Activated CD8-positive, alpha-beta T cell treated with anti-CD3 and anti-CD28 coated beads for 36 hours (primary cell): ENCODE measurements at regions of chr11 and their contacts with region 1.

Region 1: GRCh38 chr11:64787526-64788320 is 9.4 kb upstream of the SF1 start:
- DNase-seq: peak; percentile 78
- ATAC-seq: peak; percentile 78
- H3K4me3 Mint-ChIP-seq: no peak overlapping the region
- H3K27ac Mint-ChIP-seq: peak overlapping the region; percentile 49
- H3K4me1 Mint-ChIP-seq: peaks cover 4% of the 10 kb centered on the region
- H3K27me3 Mint-ChIP-seq: no peaks in the 10 kb centered on the region
- CTCF ChIP-seq: peak; percentile 66

Region 2: DNA sequence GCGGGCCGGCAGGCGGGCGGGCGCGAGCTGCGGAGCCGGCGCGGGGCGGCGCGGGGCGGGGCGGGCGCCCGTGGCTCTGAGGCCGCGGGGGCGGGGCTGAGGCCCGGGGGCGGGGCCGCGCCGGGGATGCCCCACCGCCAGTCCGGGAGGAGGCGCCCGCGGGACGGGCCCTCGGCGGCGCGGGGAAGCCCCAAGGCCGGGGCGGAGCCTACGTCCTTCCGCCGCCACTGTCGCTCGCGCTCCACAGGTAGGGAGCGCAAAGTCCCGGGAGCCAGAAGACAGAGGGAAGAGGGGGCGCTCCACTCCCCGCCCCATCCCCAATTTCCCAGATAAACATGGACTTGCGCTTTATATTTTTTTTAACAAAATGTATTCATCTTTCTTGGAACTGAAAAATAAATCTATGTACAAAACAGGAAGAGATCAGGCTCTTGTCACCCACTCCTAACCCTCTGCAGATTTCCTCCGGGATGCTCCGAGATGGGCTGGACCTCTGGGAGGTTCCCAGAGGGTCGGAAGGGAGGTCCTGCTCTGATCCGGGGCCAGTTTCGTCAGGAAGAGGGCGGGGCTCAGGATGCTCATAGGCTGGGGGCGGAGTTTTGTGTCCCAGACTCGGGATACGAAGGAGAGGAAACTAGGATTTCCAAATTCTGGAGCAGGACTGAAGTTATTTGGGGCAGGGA is 15.6 kb after region 1 on chr11 and contains the start of gene MAP4K2:
- CTCF ChIA-PET with region 1: interaction called, 17 read pairs
- POLR2A ChIA-PET with region 1: interaction called, 7 read pairs
- intact Hi-C with region 1: no loop called
- DNase-seq: peak; percentile 88
- ATAC-seq: peak; percentile 96
- H3K4me3 Mint-ChIP-seq: peak within 1 kb of the TSS; percentile 80
- H3K27ac Mint-ChIP-seq: peak within 1 kb of the TSS; percentile 89
- H3K4me1 Mint-ChIP-seq: peaks cover 37% of the 10 kb centered on the region
- H3K27me3 Mint-ChIP-seq: no peaks in the 10 kb centered on the region
- CTCF ChIP-seq: no peak
- total RNA-seq, gene MAP4K2: 56.4 to 58.0 TPM

Region 3: GRCh38 chr11:65003282-65003681 is 215.6 kb after region 1 on chr11:
- CTCF ChIA-PET with region 1: no interaction called
- POLR2A ChIA-PET with region 1: no interaction called
- intact Hi-C with region 1: no loop called
- DNase-seq: no peak
- ATAC-seq: no peak
- H3K4me3 Mint-ChIP-seq: no peak overlapping the region
- H3K27ac Mint-ChIP-seq: no peak overlapping the region
- H3K4me1 Mint-ChIP-seq: peaks cover 7% of the 10 kb centered on the region
- H3K27me3 Mint-ChIP-seq: no peaks in the 10 kb centered on the region
- CTCF ChIP-seq: no peak